ENCODE measurements at regions of chr9 and their contacts with region 1.

Region 1: GRCh38 chr9:37913480-37914153 is 9.7 kb upstream of the SLC25A51 start:
- DNase-seq: no peak
- H3K4me3 ChIP-seq: no peak overlapping the region
- H3K27me3 ChIP-seq: no peaks in the 10 kb centered on the region
- CTCF ChIP-seq: peak; percentile 97

Region 2: GRCh38 chr9:37925786-37926736 is 12.4 kb after region 1 on chr9:
- CTCF ChIA-PET with region 1: interaction called, 13 read pairs
- POLR2A ChIA-PET with region 1: no interaction called
- DNase-seq: no peak
- H3K4me3 ChIP-seq: no peak overlapping the region
- H3K27me3 ChIP-seq: no peaks in the 10 kb centered on the region
- CTCF ChIP-seq: no peak

Region 3: GRCh38 chr9:37953775-37954437 is 40.3 kb after region 1 on chr9:
- CTCF ChIA-PET with region 1: interaction called, 15 read pairs
- POLR2A ChIA-PET with region 1: no interaction called
- DNase-seq: peak; percentile 93
- H3K4me3 ChIP-seq: no peak overlapping the region
- H3K27me3 ChIP-seq: no peaks in the 10 kb centered on the region
- CTCF ChIP-seq: no peak

Region 4: DNA sequence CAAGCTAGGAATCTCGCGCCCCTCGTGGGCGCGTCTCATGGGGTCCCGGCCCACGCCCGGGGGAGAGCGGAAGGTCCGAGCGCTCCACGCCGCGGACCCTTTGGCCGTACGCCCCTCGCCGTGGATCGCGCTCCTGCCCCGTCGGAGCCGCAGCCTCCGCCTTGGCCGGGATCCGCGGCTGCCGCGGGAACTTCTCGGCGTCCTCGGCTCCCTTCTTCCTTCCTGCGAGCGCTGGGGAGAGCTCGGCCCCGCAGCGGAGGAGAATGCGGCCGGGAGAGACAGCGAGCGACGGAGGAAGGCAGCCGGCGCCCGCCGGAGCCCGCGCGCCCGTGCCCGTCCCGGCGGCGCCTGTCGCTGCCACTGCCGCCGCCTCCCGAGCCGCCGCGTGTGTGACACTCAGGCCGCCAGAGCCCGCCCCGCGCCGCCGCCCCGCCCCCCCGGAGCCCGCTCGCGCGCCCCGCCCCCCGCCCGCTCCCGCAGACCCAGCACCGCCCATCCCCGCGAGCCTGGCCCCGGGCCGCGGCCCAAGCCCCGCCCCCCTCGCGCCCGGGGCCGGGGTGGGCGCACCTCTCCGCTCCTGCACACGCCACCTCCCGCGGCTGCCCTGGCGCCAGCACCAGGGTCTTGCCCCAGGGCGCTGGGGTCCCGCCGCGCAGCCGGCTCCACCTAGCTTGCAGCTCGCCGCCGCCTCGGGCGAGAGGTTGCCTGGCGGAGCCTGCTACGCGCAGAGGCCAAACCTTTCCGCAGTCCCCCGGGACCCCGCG is 155.4 kb after region 1 on chr9 and contains the start of gene SHB:
- CTCF ChIA-PET with region 1: interaction called, 14 read pairs
- POLR2A ChIA-PET with region 1: no interaction called
- DNase-seq: no peak
- H3K4me3 ChIP-seq: peak within 1 kb of the TSS; percentile 88
- H3K27me3 ChIP-seq: no peaks in the 10 kb centered on the region
- CTCF ChIP-seq: no peak
- polyA plus RNA-seq, gene SHB: 14.0 and 18.6 TPM in 2 replicates

Region 5: DNA sequence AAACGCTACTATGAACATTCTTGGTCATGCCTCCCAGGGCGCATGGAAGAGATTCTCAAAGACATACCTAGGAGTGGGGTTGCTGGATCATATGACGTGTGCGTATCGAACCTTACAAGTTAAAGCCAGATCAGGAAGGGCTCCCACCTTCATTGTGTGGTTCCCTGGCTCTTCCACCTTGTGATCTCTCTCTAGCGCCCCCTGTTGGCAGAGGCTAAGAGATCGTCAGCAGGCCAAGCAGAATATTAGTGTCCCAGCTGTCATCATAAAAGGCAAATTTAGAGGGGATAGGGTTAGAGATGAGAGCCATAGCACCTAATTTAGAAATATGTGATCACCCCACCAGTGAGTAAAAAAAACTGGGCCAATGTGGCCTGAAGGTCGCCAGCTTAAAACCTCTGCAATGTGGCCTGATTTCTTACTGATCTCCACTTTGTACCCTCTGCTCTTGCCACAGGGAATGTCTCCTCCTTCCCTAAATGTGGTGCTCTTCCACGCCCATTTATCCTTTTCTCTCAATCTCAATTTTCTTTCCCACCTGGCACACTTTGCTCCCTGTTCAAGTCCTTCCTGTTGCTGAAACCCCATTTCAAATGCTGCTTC is 247.1 kb after region 1 on chr9:
- CTCF ChIA-PET with region 1: interaction called, 44 read pairs
- POLR2A ChIA-PET with region 1: no interaction called
- DNase-seq: no peak
- H3K4me3 ChIP-seq: no peak overlapping the region
- H3K27me3 ChIP-seq: peaks cover 7% of the 10 kb centered on the region
- CTCF ChIP-seq: peak; percentile 92

Region 6: GRCh38 chr9:38362852-38363593 is 449.4 kb after region 1 on chr9:
- CTCF ChIA-PET with region 1: interaction called, 12 read pairs
- POLR2A ChIA-PET with region 1: no interaction called
- DNase-seq: peak; percentile 39
- H3K4me3 ChIP-seq: no peak overlapping the region
- H3K27me3 ChIP-seq: no peaks in the 10 kb centered on the region
- CTCF ChIP-seq: peak; percentile 72

Measured in BJ (cell line).